WTC11 (cell line): ENCODE measurements at regions of chr2 and their contacts with region 1.

Region 1: GRCh38 chr2:131801210-131801744 is 273.6 kb downstream of the CCDC74A start:
- DNase-seq: no peak
- ATAC-seq: peak; percentile 19; the same call in 1 of the 2 replicates
- H3K4me3 Mint-ChIP-seq: no peak overlapping the region
- H3K27ac Mint-ChIP-seq: no peak overlapping the region
- H3K4me1 Mint-ChIP-seq: no peaks in the 10 kb centered on the region
- H3K27me3 Mint-ChIP-seq: peaks cover 35% of the 10 kb centered on the region
- CTCF ChIP-seq: no peak

Region 2: DNA sequence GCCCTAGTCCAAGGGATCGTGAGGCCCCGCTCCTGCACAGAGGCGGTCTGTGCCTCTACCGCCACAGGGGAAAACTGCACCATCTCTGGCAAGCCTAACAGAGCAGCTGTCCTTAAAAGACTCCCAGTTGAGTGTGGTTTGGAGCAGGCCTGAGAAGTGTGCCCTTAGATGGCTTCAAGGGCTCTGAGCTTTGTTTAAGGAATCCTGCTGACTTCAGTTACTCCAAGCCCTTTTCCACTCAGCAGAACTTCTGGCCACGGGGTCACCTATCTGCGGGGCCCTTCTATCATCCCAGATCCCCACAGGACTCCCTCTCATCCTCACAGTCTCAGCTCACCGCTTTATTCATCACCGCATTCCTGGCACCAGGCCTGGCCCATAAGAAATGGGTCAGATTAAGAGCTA is 142.1 kb before region 1 on chr2:
- CTCF ChIA-PET with region 1: no interaction called
- POLR2A ChIA-PET with region 1: no interaction called
- DNase-seq: no peak
- ATAC-seq: no peak
- H3K4me3 Mint-ChIP-seq: no peak overlapping the region
- H3K27ac Mint-ChIP-seq: no peak overlapping the region
- H3K4me1 Mint-ChIP-seq: 0 out of 2 replicates have a peak, but pooled peaks cover 5% of the 10 kb centered on the region
- H3K27me3 Mint-ChIP-seq: no peaks in the 10 kb centered on the region
- CTCF ChIP-seq: no peak

Region 3: GRCh38 chr2:131673392-131674173 is 127.7 kb before region 1 on chr2:
- CTCF ChIA-PET with region 1: interaction called, 40 read pairs
- POLR2A ChIA-PET with region 1: no interaction called
- DNase-seq: peak; percentile 80
- ATAC-seq: peak; percentile 81
- H3K4me3 Mint-ChIP-seq: peak overlapping the region; percentile 66
- H3K27ac Mint-ChIP-seq: no peak overlapping the region
- H3K4me1 Mint-ChIP-seq: no peaks in the 10 kb centered on the region; the same call in 1 of the 2 replicates
- H3K27me3 Mint-ChIP-seq: peaks cover 44% of the 10 kb centered on the region
- CTCF ChIP-seq: peak; percentile 75; the same call in 1 of the 2 replicates

Region 4: GRCh38 chr2:131682122-131682944 is 118.9 kb before region 1 on chr2:
- CTCF ChIA-PET with region 1: interaction called, 12 read pairs
- POLR2A ChIA-PET with region 1: no interaction called
- DNase-seq: peak; percentile 85
- ATAC-seq: peak; percentile 99
- H3K4me3 Mint-ChIP-seq: peak overlapping the region; percentile 92
- H3K27ac Mint-ChIP-seq: no peak overlapping the region
- H3K4me1 Mint-ChIP-seq: peaks cover 21% of the 10 kb centered on the region
- H3K27me3 Mint-ChIP-seq: peaks cover 11% of the 10 kb centered on the region
- CTCF ChIP-seq: no peak

Region 5: DNA sequence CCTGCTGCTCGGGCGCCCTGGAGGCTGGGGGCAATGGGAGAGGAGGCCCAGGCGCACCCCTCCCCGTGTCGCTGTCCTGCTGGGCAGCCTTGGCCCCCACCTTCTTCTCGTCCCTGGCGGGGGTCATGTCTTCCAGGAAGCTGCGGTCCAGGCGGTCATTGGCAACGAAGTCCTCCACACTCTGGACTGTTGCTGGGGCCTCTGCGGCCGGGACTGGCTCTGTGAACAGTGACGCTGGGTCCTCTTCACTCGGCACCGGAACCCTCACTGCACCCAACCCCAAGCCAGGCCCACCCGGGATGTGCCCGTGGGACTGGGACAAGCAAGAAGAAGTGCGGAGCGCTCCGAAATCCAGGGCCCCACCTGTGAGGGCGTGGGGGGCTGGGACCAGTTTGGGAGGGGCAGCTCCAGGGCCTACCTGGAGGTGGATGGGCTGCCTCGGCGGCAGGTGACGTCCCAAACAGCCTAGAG is 34.4 kb after region 1 on chr2:
- CTCF ChIA-PET with region 1: interaction called, 10 read pairs
- POLR2A ChIA-PET with region 1: no interaction called
- DNase-seq: no peak
- ATAC-seq: no peak
- H3K4me3 Mint-ChIP-seq: no peak overlapping the region
- H3K27ac Mint-ChIP-seq: no peak overlapping the region
- H3K4me1 Mint-ChIP-seq: no peaks in the 10 kb centered on the region
- H3K27me3 Mint-ChIP-seq: peaks cover 8% of the 10 kb centered on the region
- CTCF ChIP-seq: no peak